ENCODE measurements at regions of chr1 and their contacts with region 1.

Region 1: GRCh38 chr1:15090373-15090772 is 63.2 kb upstream of the TMEM51 start:
- DNase-seq: peak; percentile 63

Region 2: GRCh38 chr1:14755518-14756252 is 334.7 kb before region 1 on chr1:
- in situ Hi-C with region 1: loop called (anchors 25 kb)
- DNase-seq: peak; percentile 34

Region 3: DNA sequence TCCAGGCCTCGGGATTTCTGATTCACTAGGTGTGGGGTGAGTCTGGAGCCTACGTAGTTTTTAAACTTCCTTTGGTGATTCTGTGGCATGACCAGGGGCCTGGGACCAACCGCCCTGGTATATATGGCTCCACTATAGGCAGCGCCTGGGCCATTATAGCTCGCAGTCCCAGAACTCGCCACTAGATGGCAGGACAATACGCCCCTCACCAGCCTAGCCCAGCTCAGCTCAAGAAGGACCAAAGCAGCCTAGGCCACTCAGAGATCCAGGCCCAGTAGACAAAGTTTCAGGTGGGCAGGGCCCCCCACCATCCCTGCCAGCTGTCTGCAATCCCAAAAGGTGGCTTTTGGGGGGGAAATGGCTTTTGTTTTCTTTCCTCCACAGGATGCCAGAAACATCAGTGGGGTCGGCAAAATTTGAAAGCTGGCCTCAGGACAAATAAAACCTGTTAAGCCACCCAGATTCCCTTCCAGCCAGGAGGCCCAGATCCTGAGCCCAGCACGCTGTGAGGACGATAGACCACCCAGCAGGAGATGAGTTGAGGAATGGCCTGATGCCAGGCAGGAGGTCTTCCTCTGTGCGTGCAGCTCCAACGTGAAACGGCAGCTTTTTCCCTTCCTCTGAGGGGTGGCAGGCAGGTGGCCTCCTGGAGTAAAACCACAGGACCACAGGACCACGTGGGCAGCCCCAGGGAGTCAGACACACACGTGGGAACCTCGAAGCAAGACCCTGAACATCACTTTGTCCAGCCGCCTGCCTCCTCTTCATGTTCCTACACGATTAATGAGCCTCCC is 38.3 kb after region 1 on chr1:
- in situ Hi-C with region 1: no loop called
- DNase-seq: peak; percentile 81